Activated CD8-positive, alpha-beta T cell treated with anti-CD3 and anti-CD28 coated beads, Interleukin-2, amount 10 ng/mL, durations not matched to agents 7 days and 5 days (primary cell): ENCODE measurements at regions of chr3 and their contacts with region 1.

Region 1: GRCh38 chr3:101849051-101849720 is at the start of gene NFKBIZ:
- DNase-seq: peak; percentile 94
- ATAC-seq: peak; percentile 84
- H3K4me3 Mint-ChIP-seq: peak within 1 kb of the TSS; percentile 95
- H3K27ac Mint-ChIP-seq: peak within 1 kb of the TSS; percentile 97
- H3K4me1 Mint-ChIP-seq: peaks cover 40% of the 10 kb centered on the region
- H3K27me3 Mint-ChIP-seq: no peaks in the 10 kb centered on the region
- total RNA-seq, gene NFKBIZ: 45.3 to 48.1 TPM

Region 2: DNA sequence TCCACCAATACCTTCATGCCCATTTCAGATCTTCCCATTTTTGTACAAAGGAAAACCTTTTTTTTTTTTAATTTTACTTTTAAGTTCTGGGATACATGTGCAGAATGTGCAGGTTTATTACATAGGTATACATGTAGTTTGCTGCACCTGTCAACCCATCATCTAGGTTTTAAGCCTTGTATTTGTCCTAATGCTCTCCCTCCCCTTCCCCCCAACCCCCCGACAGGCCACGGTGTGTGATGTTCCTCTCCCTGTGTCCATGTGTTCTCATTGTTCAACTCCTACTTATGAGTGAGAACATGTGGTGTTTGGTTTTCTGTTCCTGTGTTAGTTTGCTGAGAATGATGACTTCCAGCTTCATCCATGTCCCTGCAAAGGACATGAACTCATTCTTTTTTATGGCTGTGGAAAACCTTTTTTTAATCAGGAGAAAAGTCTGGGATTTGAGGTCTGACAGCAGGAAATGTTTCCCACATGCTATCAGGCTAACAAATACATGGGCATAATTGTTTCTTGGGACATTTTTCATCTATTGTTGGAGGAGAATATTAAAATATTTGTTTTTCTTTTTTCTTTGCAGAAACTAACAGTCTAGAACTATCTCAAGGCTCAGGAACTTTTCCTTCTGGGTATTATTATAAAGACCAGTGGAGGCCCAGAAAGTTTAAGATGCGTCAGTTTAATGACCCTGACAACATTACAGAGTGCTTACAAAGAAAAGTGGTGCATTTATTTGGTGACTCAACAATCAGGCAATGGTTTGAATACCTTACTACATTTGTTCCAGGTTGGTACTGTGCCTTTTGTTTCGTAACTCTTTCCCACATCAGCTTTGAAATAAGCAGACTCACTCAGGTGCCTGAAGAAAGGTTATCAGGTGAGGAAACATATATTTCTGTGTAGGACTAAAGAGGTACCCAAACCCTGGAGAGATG is 32.7 kb before region 1 on chr3:
- CTCF ChIA-PET with region 1: interaction called, 29 read pairs
- POLR2A ChIA-PET with region 1: interaction called, 23 read pairs
- DNase-seq: no peak
- ATAC-seq: no peak
- H3K4me3 Mint-ChIP-seq: no peak overlapping the region
- H3K27ac Mint-ChIP-seq: no peak overlapping the region
- H3K4me1 Mint-ChIP-seq: peaks cover 22% of the 10 kb centered on the region
- H3K27me3 Mint-ChIP-seq: no peaks in the 10 kb centered on the region

Region 3: DNA sequence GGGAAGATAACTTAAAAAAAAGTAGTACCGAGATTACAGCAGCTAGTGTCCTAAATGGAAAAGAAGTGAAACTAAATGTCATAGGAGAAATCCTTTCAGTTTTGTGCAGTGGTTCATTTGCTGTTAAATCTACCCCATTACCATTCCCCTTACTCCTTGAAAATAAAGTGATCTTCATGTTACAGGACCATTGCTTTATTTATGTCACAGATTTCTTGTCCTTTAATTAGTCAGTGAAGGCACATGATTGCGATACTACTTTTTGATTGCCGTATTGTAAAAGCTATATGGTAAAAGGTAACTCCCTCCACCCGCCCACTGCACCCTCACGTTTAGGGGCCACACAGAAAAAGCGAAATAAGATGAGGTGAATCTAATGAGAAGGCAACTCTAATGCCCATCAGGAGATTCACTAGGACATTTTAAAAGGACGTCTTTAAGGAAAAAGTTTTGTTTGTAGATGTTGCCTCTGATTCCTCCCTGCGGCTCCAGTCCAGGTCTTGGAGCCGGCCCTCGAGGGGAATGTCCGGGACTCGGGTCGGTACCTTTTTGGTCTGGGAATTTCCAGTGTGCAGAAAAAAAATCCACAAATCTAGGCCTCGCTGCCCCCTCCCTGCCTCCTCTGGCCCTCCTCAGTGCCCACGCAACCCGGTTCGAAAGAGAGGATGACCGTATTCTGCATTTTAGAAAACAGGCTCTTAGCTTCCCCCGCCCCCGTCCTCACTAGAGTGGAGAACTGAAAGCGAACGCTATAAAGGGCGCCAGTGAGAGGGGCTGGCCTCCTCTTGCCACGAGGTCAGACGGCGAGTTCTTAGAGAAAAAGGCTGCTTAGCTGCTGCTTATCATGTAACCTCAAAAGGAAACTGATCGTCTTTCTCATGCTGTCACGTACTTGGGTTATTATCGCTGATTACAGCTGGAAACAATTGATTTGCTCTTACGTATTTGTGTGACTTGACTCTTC is 21.7 kb before region 1 on chr3:
- CTCF ChIA-PET with region 1: interaction called, 15 read pairs
- POLR2A ChIA-PET with region 1: interaction called, 298 read pairs
- DNase-seq: peak; percentile 89
- ATAC-seq: peak; percentile 92
- H3K4me3 Mint-ChIP-seq: peak overlapping the region; percentile 93
- H3K27ac Mint-ChIP-seq: peak overlapping the region; percentile 93
- H3K4me1 Mint-ChIP-seq: peaks cover 58% of the 10 kb centered on the region
- H3K27me3 Mint-ChIP-seq: no peaks in the 10 kb centered on the region

Region 4: DNA sequence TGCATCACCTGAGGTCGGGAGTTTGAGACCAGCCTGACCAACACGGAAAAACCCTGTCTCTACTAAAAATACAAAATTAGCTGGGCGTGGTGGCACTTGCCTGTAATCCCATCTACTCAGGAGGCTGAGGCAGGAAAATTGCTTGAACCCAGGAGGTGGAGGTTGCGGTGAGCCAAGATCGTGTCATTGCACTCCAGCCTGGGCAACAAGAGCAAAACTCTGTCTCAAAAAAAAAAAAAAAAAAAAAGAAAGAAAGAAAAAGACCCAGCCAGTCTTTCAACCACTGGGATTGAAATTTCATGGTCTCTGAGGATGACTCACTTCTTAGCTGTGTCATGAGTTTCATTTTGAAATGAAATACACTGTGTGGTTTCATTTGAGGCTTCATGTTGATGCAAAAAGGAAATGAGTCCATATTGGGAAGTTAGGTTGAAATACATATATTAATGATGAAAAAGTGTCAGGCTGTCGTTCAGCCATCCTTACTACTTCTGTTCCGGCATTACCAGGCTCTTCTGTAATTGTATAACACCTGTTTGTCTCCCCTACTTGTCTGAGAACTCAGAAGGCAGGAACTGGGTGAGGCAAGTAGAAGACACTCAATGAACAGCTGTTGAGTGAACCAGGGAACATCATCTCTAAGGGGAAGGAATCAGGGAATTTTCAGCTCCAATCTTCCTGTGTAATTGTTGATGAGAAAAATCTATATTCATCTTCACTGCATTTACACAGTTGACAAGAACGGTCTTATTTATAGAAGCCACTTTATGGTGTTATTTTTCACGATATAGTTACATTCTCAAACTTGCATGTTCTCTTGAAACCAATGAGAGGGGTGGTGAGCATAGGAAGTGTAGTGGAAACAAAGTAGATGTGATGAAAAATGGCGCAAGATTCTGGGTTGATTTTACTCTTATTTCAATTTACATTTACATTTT is 87.5 kb after region 1 on chr3:
- CTCF ChIA-PET with region 1: interaction called, 4 read pairs
- POLR2A ChIA-PET with region 1: interaction called, 25 read pairs
- DNase-seq: no peak
- ATAC-seq: peak; percentile 91
- H3K4me3 Mint-ChIP-seq: peak overlapping the region; percentile 32
- H3K27ac Mint-ChIP-seq: peak overlapping the region; percentile 77
- H3K4me1 Mint-ChIP-seq: peaks cover 38% of the 10 kb centered on the region
- H3K27me3 Mint-ChIP-seq: no peaks in the 10 kb centered on the region

Region 5: DNA sequence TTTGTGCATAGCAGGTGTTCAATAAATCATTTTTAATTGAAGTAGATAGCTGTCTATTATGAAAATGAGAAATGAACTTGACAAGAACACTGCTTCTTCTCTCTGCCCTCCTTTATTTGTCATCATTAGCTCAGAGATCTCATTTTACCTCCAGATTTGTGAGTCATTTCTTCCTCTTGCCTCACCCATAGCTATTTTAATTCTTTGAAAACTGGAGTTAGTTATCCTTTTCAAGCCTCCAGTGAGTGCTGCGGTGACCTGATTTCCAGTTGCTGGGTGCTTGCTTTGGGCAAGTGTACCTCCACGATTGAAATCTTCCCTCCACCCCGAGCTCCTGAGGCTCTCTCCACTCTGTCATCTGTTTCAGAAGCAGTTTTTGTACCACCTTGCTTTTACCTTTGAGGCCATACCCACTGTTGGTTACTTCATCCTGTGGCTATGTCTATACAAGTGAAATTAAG is 114.7 kb after region 1 on chr3:
- CTCF ChIA-PET with region 1: no interaction called
- POLR2A ChIA-PET with region 1: no interaction called
- DNase-seq: no peak
- ATAC-seq: no peak
- H3K4me3 Mint-ChIP-seq: no peak overlapping the region
- H3K27ac Mint-ChIP-seq: no peak overlapping the region
- H3K4me1 Mint-ChIP-seq: peaks cover 21% of the 10 kb centered on the region
- H3K27me3 Mint-ChIP-seq: no peaks in the 10 kb centered on the region